PC-3 (cell line): ENCODE measurements at regions of chr1 and their contacts with region 1.

Region 1: GRCh38 chr1:219990782-219991510 is 55.4 kb downstream of the EPRS1 start:
- DNase-seq: peak; percentile 80
- ATAC-seq: peak; percentile 55
- H3K4me3 ChIP-seq: no peak overlapping the region
- H3K27ac ChIP-seq: no peak overlapping the region
- H3K4me1 ChIP-seq: no peaks in the 10 kb centered on the region
- H3K27me3 ChIP-seq: no peaks in the 10 kb centered on the region
- CTCF ChIP-seq: peak; percentile 95

Region 2: GRCh38 chr1:219442611-219443061 is 548.3 kb before region 1 on chr1:
- CTCF ChIA-PET with region 1: no interaction called
- POLR2A ChIA-PET with region 1: no interaction called
- intact Hi-C with region 1: no loop called
- DNase-seq: peak; percentile 99
- ATAC-seq: peak; percentile 84
- H3K4me3 ChIP-seq: peak overlapping the region; percentile 23; the same call in 1 of the 2 replicates
- H3K27ac ChIP-seq: peak overlapping the region; percentile 81
- H3K4me1 ChIP-seq: peaks cover 48% of the 10 kb centered on the region
- H3K27me3 ChIP-seq: no peaks in the 10 kb centered on the region
- CTCF ChIP-seq: no peak

Region 3: DNA sequence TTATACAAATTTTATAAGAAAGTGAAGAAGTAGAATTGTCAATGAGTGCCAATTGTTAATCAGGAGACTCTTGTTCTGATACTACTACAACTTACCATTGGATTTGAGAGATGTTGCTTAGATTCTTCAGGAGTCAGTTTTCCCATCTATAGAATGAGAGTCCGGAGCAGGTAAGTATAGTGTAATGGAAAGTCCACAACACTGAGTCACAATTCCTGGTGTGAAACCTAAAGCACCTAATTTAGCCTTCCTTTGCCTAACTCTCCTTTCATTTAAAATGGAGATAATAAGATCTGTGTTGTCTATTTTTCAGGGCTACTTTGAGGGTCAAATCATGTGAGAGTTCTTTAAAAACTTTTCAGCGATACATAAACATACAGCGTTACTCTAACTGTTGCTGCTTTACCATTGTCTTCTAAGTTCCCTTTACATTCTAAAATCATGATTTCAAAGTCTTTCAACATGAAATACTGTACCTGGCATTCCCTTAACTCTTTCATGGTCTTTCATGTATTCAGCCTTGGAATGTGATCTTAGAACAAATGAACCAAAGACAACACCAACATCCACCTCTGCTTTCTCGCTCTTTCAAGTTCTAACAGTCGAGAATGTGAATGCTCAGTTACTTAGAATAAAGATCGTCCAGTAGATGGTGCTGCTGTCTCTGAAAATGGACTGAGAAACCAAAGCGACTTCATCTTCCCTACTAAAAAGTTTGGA is 153.5 kb before region 1 on chr1:
- CTCF ChIA-PET with region 1: no interaction called
- POLR2A ChIA-PET with region 1: no interaction called
- intact Hi-C with region 1: loop called (anchors 1 kb)
- DNase-seq: peak; percentile 91
- ATAC-seq: peak; percentile 92
- H3K4me3 ChIP-seq: no peak overlapping the region
- H3K27ac ChIP-seq: no peak overlapping the region
- H3K4me1 ChIP-seq: no peaks in the 10 kb centered on the region
- H3K27me3 ChIP-seq: peaks cover 53% of the 10 kb centered on the region
- CTCF ChIP-seq: peak; percentile 99

Region 4: DNA sequence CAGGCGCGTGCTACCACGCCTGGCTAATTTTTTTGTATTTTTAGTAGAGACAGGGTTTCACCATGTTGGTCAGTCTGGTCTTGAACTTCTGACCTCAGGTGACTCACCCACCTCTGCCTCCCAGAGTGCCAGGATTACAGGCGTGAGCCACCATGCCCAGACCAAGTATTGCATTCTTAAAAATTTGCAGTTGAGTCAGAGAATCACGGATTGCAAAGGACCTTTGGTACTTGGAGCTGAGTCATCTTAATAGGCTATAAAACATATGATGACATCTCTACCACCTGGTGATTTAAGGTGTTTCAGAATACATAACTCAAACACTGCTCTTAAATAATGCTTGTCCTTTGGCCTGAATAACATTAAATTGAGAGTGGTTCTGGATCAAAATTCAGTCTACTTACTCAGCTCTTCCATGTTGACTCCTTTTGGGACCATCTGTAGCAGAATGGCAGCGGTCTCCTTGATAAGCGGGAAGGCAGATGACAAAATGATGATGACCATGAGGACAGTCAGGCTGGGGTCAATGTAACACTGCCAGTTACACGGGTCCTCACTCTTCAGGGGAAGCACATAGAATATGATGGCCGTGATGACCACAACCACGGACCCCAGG is 73.0 kb before region 1 on chr1:
- CTCF ChIA-PET with region 1: no interaction called
- POLR2A ChIA-PET with region 1: no interaction called
- intact Hi-C with region 1: no loop called
- DNase-seq: peak; percentile 99
- ATAC-seq: peak; percentile 89
- H3K4me3 ChIP-seq: no peak overlapping the region
- H3K27ac ChIP-seq: peak overlapping the region; percentile 3; the same call in 1 of the 2 replicates
- H3K4me1 ChIP-seq: peaks cover 7% of the 10 kb centered on the region
- H3K27me3 ChIP-seq: no peaks in the 10 kb centered on the region
- CTCF ChIP-seq: no peak

Region 5: GRCh38 chr1:219965285-219966070 is 25.5 kb before region 1 on chr1:
- CTCF ChIA-PET with region 1: no interaction called
- POLR2A ChIA-PET with region 1: interaction called, 14 read pairs
- intact Hi-C with region 1: no loop called
- DNase-seq: no peak
- ATAC-seq: no peak; the same call in 1 of the 2 replicates
- H3K4me3 ChIP-seq: no peak overlapping the region
- H3K27ac ChIP-seq: no peak overlapping the region
- H3K4me1 ChIP-seq: no peaks in the 10 kb centered on the region
- H3K27me3 ChIP-seq: no peaks in the 10 kb centered on the region
- CTCF ChIP-seq: no peak

Region 6: DNA sequence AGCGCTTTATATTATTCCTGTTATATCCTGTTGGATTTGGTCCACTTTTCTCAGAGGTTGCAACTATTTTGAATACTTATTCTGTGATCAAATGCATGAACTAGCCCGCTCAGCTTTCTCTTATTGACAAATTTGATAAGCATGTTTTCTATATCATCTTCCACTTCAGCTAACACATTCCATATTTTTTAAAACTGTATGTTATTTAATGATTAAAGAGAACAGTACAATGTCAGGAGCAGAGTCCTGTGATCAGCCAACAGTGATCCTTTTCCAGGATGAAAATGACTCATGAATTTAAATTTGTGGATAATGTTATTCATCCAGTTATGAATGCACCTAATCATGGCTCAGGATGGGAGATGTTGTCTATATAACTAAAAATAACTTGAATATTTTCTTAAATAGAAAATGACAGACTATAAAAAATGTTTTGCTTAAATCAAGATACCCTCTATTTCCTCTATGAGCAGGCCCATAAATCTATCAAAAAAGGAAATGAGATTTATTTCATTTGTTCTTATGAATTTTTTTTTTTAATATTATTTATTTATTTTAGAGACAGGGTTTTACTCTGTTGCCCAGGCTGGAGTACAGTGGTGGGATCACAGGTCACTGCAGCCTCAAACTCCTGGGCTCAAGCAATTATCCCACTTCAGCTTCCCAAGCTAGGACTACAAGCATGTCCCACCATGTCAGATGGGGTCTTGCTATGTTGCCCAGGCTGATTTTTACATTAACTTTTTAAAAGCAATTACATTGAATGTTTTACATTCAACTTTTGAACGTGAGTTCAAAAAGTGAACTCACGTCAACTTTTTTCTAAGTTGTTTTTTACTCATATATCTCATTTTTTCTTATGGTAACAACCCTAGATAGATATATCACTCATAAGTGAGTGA is 86.2 kb after region 1 on chr1:
- CTCF ChIA-PET with region 1: interaction called, 12 read pairs
- POLR2A ChIA-PET with region 1: no interaction called
- intact Hi-C with region 1: no loop called
- DNase-seq: peak; percentile 33
- ATAC-seq: peak; percentile 99
- H3K4me3 ChIP-seq: no peak overlapping the region
- H3K27ac ChIP-seq: peak overlapping the region; percentile 31; the same call in 1 of the 2 replicates
- H3K4me1 ChIP-seq: no peaks in the 10 kb centered on the region
- H3K27me3 ChIP-seq: no peaks in the 10 kb centered on the region
- CTCF ChIP-seq: no peak